Gastrocnemius medialis (tissue), 4 donors: ENCODE measurements at regions of chr3 and their contacts with region 1.

Region 1: DNA sequence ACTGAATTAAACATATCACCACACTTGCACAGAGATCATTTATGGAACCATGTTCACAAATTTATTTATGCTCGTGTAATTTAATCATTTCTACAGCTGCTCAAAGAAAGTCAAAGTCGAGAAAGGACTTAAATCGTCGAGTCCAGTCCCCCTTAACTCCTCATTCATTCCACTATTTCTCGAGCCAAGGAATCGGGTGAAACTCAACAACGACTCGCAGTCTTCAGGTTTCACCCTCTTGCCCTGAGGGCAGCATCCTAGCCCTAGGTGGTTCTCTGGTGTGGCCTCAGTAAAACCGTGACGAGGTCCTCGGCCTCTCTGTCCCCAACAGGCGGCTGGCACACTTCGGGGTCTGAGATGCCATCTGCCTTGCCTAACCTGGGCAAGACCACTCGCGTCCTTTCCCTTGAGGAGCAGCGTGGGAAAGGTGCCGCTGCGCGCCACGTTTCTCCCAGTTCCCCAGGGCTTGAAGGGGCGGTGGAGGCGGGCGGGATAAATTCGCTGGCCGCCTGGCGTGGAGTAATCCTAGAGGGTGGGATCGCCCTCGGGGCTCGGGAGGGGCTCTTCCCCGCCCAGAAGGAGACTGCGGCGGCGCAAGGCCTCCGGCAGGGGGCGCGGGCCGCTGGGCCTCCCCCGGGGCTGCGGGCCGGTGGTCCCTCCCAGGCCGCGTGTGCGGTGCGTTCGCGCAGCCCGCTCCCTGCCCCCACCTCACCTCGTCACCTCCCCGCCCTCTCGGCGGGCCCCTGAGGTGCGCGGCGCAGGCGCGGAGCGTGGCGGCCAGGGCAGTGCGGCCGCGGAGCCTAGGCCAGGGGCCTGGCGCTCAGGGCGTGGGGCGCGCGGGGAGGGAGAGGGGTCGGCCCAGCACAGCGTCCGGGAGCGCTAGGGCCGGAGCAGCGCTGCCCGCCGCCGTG is at the start of gene ZNF639:
- DNase-seq: peak; percentile 54 to 80
- ATAC-seq: peak; percentile 76 to 83
- H3K4me3 ChIP-seq: peak within 1 kb of the TSS; percentile 85 to 94 (median 92)
- H3K27ac ChIP-seq: peak within 1 kb of the TSS; percentile 89 to 96 (median 92)
- H3K4me1 ChIP-seq: peaks cover 23 to 28% of the 10 kb centered on the region in 2 donors
- H3K27me3 ChIP-seq: no peaks in the 10 kb centered on the region
- CTCF ChIP-seq: peak; percentile 74 to 93 (median 89)
- POLR2A ChIP-seq: peak; percentile 88 to 91
- total RNA-seq, gene ZNF639: 28.7 to 43.7 (median 39.7) TPM

Region 2: DNA sequence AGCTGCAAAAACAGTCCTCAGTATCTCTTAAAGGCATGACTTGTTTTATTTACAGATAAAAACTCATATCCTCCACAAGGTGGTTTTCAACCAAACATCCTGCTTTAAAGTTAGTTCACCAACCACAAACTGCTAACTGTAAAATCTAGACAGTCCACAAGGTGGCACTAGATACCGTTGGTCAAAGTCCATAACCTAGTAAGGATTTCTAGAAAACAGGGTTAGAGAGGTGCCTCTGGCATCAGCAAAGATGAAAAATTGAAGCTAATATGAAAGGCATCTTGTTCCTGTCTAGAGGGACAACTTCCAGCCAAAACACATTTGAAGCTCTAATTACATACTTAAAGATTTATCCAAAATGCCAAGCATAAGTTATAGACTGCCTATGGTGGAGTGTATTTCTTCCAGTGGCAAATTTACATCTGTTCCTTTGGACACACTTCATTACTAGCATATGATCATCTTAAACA is 307.0 kb before region 1 on chr3:
- in situ Hi-C with region 1: loop called (anchors 5 kb)
- intact Hi-C with region 1: no loop called
- DNase-seq: no peak
- ATAC-seq: peak; percentile 65 to 83
- H3K4me3 ChIP-seq: no peak overlapping the region
- H3K27ac ChIP-seq: no peak overlapping the region
- H3K4me1 ChIP-seq: peaks cover 0 to 10% of the 10 kb centered on the region in 2 donors
- H3K27me3 ChIP-seq: no peaks in the 10 kb centered on the region
- CTCF ChIP-seq: peak; percentile 62 to 82 (median 74)
- POLR2A ChIP-seq: no peak

Region 3: GRCh38 chr3:179260949-179261765 is 61.4 kb before region 1 on chr3:
- in situ Hi-C with region 1: no loop called
- intact Hi-C with region 1: loop called (anchors 5 kb)
- DNase-seq: peak; percentile 27 to 50
- ATAC-seq: peak; percentile 72 to 90
- H3K4me3 ChIP-seq: peak overlapping the region; percentile 58 to 78 (median 72)
- H3K27ac ChIP-seq: peak overlapping the region; percentile 25 to 70 (median 50)
- H3K4me1 ChIP-seq: no peaks in the 10 kb centered on the region
- H3K27me3 ChIP-seq: no peaks in the 10 kb centered on the region
- CTCF ChIP-seq: no peak
- POLR2A ChIP-seq: peak in 1 of 2 donors; percentile 16

Region 4: DNA sequence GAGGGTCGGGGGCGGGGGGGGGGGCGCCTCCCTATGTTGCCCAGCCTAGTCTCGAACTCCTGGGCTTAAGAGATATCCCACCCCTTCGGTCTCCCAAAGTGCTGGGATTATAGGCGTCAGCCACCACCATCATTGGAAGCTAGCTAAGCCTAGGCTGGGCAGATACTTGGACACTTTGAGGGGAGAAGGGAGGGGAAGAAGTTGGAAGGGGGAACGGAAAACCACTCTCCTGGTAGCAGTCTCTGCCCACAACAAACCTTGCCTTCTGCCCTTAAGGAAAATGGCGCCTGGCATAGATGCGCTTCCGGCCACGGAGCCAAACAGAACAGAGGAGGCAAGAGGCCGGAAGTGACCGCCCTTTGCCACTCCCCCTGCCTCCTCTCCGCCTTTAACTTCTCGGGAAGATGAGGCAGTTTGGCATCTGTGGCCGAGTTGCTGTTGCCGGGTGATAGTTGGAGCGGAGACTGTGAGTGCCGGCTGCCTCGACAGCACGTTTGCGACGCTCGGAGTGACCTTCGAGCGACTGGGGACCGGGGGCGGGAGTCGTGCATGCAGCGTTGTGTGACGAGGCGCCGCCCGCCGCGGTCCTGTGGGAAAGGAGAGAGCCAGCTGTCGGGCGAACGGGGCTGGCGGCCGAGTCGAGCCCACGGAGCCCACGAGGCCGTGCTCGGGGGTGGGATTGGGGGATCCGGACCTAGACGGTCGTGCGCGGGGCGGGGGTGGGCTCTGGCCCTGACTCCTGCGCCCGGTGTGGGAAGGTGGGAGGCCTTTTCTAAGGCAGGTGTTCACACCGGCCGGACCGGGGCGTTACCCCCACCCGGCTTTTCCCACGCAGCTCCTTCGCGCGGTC is 25.0 kb after region 1 on chr3 and contains the start of gene MFN1:
- in situ Hi-C with region 1: no loop called
- intact Hi-C with region 1: loop called (anchors 1 kb)
- DNase-seq: peak; percentile 91 to 95
- ATAC-seq: peak; percentile 99 to 100
- H3K4me3 ChIP-seq: peak within 1 kb of the TSS; percentile 90 to 93 (median 91)
- H3K27ac ChIP-seq: peak within 1 kb of the TSS; percentile 84 to 90 (median 89)
- H3K4me1 ChIP-seq: peaks cover 6 to 7% of the 10 kb centered on the region in 2 donors
- H3K27me3 ChIP-seq: no peaks in the 10 kb centered on the region
- CTCF ChIP-seq: no peak
- POLR2A ChIP-seq: peak; percentile 60 to 86
- total RNA-seq, gene MFN1: 27.2 to 37.1 (median 32.9) TPM

Region 5: GRCh38 chr3:179451265-179452175 is 129.0 kb after region 1 on chr3 and contains the start of gene GNB4:
- in situ Hi-C with region 1: no loop called
- intact Hi-C with region 1: loop called (anchors 1 kb)
- DNase-seq: peak; percentile 43 to 53
- ATAC-seq: peak; percentile 82 to 84
- H3K4me3 ChIP-seq: peak within 1 kb of the TSS; percentile 58 to 68 (median 63)
- H3K27ac ChIP-seq: peak within 1 kb of the TSS; percentile 61 to 80 (median 74)
- H3K4me1 ChIP-seq: peaks cover 0 to 19% of the 10 kb centered on the region in 2 donors
- H3K27me3 ChIP-seq: peaks cover 0 to 30% (median 6%) of the 10 kb centered on the region in 3 donors
- CTCF ChIP-seq: no peak
- POLR2A ChIP-seq: peak in 1 of 2 donors; percentile 54
- total RNA-seq, gene GNB4: 3.4 to 4.9 (median 3.7) TPM